Activated CD8-positive, alpha-beta T cell treated with anti-CD3 and anti-CD28 coated beads, Interleukin-2, amount 10 ng/mL, durations not matched to agents 7 days and 5 days (primary cell): ENCODE measurements at regions of chr22 and their contacts with region 1.

Region 1: DNA sequence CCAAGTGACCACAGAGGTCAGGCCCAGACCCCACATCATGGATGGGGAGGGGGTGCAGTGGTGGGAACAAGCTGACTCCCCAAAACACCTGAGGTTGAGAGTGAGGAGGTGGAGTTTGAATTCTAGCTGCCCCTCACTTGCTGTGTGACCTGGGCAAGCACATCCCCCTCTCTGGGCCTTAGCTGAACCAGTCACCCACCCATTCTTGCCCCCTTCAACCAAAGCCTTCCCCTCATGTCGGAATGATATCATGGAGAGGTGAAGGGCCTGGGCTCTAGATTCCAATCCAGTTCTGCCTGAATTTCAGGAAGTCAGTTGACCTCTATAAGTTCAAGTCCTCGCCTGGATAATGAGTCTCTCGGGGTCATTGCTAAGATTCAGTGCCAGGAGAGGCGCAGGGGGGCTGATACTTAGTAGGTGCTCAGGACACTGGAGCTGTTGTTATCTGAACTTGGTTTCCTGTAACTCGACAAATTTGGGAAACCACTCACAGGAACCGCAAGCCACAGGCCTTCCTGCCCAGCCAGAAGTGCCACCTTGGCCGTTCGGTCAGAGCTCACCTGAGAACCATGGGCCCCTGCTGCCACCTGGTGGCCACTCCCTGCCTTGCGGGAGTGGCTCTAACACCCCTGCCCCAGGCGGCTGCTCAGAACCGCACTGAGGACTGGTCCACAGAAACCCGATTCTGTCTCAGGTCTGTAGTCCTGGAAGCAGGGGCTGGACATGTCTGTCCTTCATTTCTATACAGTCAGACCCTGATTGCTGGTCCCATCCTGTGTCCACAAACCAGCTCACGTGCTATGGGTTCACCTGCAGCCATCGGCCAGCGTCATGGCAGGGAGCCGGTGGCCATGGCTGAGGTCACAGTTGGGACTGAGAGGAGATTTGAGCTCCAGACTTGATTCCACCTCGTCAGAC is 6.9 kb downstream of the CDC42EP1 start:
- DNase-seq: peak; percentile 97
- ATAC-seq: peak; percentile 91
- H3K4me3 Mint-ChIP-seq: peak overlapping the region; percentile 63
- H3K27ac Mint-ChIP-seq: peak overlapping the region; percentile 79
- H3K4me1 Mint-ChIP-seq: peaks cover 28% of the 10 kb centered on the region
- H3K27me3 Mint-ChIP-seq: peaks cover 36% of the 10 kb centered on the region

Region 2: DNA sequence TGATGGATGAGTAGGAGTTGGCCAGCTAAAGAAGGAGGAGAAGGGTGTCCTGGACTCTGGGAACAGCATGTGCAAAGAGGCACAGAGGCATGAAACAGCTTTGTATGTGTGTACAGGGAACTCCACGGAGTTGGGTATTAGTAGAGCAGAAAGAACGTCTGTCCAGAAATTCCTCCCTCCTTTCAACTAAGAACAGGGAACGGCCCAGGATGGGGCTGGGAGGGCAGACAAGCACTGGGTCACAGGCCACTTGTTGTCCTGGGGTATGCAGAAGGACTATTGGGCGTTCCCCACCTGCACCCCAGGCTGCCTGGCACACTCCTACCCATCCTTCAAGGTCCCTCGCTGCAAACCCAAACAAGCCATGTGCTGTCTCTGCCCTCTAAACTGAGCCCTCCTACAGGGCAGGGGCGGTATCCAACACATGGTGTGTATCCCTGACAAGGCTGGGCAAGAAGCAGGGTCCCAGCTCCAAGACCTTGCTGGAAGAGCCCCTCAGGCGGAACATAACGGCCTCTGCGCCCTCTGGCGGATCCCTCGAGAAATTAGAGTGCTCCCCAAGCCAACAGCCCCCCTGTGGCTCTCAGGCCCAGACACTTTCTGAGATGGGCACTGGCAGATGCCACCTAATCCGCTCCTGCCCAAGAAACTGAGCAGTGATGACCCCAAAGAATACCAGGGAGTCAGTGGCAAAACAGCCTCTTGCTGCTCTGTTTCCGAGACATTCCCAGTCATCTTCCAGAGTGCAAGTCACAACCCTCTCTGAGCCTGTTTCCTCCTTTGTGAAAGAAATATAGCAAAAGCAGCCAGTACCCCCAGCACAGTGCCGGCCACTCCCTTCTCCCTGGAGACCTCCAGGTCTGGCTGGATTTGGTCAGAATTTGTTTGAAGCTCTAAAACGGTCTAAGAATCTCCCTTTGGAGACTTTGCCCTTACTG is 138.2 kb before region 1 on chr22:
- CTCF ChIA-PET with region 1: interaction called, 10 read pairs
- POLR2A ChIA-PET with region 1: no interaction called
- DNase-seq: peak; percentile 71
- ATAC-seq: peak; percentile 66
- H3K4me3 Mint-ChIP-seq: no peak overlapping the region
- H3K27ac Mint-ChIP-seq: no peak overlapping the region
- H3K4me1 Mint-ChIP-seq: peaks cover 21% of the 10 kb centered on the region
- H3K27me3 Mint-ChIP-seq: peaks cover 54% of the 10 kb centered on the region

Region 3: DNA sequence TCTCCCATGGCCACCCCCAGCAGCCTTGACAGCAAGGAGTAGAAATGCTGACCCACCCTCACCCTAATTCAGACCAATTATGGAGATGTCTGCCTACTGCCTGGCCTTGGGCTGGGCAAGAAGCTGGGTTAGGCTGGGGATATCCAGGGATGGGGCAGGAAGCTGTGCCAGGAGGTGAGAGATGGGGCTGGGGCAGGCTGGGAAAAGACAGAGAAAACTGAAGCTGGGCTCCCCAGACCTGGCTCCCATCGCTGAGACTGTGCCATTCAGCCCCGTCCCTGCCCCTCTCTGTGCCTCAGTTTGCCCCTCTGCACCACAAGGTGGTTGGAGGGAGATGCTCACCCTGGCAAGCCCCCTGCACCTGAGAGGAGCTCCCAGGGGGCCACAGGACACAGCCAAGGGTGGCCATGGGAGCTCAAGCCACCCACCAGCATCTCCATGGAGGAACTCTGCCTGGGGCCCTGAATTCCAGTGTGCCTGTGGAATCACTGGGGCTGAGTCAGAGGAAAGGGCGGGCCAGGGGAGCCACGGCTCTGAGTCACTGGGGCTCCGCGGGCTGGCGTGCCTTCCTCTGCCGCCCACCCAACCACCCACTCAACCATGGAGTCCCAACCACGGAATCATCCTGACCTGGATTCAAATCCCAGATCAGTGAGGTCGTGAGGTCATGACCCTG is 42.0 kb before region 1 on chr22:
- CTCF ChIA-PET with region 1: interaction called, 17 read pairs
- POLR2A ChIA-PET with region 1: interaction called, 3 read pairs
- DNase-seq: no peak
- ATAC-seq: no peak
- H3K4me3 Mint-ChIP-seq: no peak overlapping the region
- H3K27ac Mint-ChIP-seq: no peak overlapping the region
- H3K4me1 Mint-ChIP-seq: peaks cover 12% of the 10 kb centered on the region
- H3K27me3 Mint-ChIP-seq: peaks cover 39% of the 10 kb centered on the region

Region 4: GRCh38 chr22:37581504-37581903 is 14.3 kb after region 1 on chr22:
- CTCF ChIA-PET with region 1: interaction called, 29 read pairs
- POLR2A ChIA-PET with region 1: interaction called, 3 read pairs
- DNase-seq: no peak
- ATAC-seq: no peak
- H3K4me3 Mint-ChIP-seq: no peak overlapping the region
- H3K27ac Mint-ChIP-seq: no peak overlapping the region
- H3K4me1 Mint-ChIP-seq: peaks cover 13% of the 10 kb centered on the region
- H3K27me3 Mint-ChIP-seq: peaks cover 11% of the 10 kb centered on the region

Region 5: DNA sequence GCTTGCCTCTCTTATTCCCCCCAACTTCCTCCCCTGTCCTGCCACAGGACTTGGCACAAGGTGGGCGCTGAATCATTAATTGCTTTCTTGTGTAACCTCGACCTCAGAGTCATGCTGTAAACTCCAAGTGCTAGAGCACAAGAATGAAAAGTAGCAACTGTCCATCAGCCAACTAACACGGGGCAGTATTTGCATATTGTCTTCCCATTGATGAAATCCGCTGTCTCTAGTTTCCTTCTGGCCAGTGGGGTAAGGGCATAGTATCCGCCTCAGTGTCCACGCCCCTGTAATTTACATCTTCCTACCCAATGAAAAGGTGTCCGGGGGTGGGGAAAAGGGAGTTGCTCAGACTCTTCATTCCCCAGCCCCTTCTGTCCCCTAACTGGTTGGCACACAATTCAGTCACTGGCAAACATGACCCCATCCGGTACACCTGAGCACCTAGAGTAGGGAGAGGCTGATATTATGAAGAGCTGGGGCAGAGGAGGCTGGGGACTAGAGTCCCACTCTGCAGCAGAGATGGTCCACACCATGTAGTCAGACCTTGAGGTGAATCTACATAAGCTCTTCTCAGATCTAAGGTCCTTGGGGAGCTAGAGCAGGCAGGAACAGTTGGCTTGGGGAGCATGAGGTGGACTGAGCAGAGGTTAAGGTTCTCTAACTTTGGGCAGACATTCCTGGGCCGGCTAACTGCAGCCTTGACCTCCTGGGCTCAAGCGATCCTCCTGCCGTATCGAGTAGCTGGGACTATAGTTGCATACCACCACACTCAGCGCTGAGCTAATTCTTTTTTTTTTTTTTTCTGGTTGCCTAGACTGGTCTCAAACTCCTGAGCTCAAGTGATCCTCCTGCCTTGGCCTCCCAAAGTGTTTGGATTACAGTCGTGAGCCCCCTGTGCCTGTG is 34.6 kb after region 1 on chr22:
- CTCF ChIA-PET with region 1: interaction called, 30 read pairs
- POLR2A ChIA-PET with region 1: no interaction called
- DNase-seq: no peak
- ATAC-seq: no peak
- H3K4me3 Mint-ChIP-seq: no peak overlapping the region
- H3K27ac Mint-ChIP-seq: no peak overlapping the region
- H3K4me1 Mint-ChIP-seq: peaks cover 30% of the 10 kb centered on the region
- H3K27me3 Mint-ChIP-seq: peaks cover 20% of the 10 kb centered on the region